ENCODE measurements at regions of chr7 and their contacts with region 1.

Region 1: DNA sequence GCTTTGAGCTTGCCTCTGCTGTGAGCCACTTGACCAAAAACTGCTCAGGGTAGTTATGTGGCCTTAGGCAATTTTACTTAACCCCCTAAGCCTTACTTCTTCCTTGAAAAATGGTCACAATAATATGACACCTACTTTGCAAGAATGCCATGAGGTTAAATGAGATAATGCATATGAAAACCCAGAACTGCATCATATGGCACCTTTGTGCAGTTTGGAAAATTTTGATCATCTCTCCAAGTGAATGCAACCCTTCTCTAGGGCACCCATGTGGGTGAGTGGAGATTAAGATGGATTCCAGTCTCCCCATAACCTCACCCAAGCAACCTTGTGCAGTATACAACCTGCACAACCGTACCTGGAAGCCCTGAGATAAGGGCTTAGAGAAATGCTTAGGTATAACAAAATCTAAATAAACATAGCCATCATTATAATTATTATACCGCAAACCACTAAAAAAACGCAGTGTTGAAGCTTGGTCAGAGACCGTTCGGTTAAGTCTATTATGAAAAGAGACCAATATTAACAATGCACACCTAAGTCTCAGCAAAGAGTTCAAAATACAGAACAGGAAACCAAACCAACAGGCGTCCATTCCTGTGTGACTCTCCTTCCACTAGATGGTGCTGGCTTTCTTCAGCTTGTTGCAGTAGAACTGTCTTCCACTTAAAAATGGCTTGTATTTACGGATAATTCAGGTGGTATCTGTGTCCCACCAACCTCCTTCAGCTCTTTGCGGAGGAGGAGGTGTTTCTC is 21.0 kb upstream of the ASB15 start:
- DNase-seq: peak in 2 of 4 experiments; percentile 43 to 78
- ATAC-seq: peak; percentile 96
- H3K4me3 ChIP-seq: no peak overlapping the region
- H3K27ac ChIP-seq: no peak overlapping the region
- H3K4me1 ChIP-seq: 0 out of 5 replicates have a peak, but pooled peaks cover 0 to 2% of the 10 kb centered on the region in 2 experiments
- H3K27me3 ChIP-seq: no peaks in the 10 kb centered on the region
- CTCF ChIP-seq: peak; percentile 81 to 95 (median 83)
- EP300 ChIP-seq: no peak
- POLR2A ChIP-seq: no peak
- RAD21 ChIP-seq: peak; percentile 97 to 98

Region 2: DNA sequence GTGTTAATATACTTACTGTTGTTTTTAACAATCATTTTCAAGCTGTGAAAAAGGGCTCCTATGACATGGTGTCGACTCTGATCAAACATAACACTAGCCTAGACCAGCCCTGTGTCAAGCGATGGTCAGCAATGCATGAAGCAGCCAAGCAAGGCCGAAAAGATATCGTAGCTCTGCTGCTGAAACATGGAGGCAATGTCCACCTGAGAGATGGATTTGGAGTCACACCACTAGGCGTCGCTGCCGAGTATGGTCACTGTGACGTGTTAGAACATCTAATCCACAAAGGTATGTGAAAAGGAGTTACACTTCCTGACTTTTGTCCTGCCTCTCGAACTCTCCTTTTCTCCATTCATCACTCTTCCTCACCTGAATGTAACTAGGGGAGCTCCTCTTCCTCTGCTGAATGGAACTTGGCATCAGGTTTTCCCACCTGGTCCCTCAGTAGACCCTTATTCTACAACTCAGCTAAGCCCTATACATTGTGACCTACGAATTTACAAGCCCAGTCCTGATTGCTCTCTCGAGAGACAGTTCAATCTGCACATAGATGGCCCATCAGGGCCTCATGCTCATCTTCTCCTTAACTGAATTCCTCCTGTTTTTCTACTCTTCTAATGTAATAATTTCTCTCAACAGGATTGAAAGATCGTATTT is 44.1 kb after region 1 on chr7:
- CTCF ChIA-PET with region 1: no interaction called
- POLR2A ChIA-PET with region 1: no interaction called
- in situ Hi-C with region 1: no loop called
- intact Hi-C with region 1: loop called (anchors 1 kb)
- DNase-seq: peak; percentile 76 to 93 (median 78)
- ATAC-seq: peak; percentile 91
- H3K4me3 ChIP-seq: no peak overlapping the region
- H3K27ac ChIP-seq: peak overlapping the region; percentile 11; the same call in 1 of the 3 replicates
- H3K4me1 ChIP-seq: peaks cover 0 to 6% of the 10 kb centered on the region in 2 experiments; a peak in 2 of 5 replicates
- H3K27me3 ChIP-seq: no peaks in the 10 kb centered on the region; a peak in 1 of 5 replicates
- CTCF ChIP-seq: peak; percentile 92 to 99 (median 97)
- EP300 ChIP-seq: 0 out of 2 replicates have a peak, but pooled peaks have one; percentile 29
- POLR2A ChIP-seq: no peak
- RAD21 ChIP-seq: peak; percentile 54 to 85

Region 3: GRCh38 chr7:123797673-123798527 is 217.3 kb after region 1 on chr7:
- CTCF ChIA-PET with region 1: no interaction called
- POLR2A ChIA-PET with region 1: no interaction called
- in situ Hi-C with region 1: no loop called
- intact Hi-C with region 1: loop called (anchors 5 kb)
- DNase-seq: peak in 3 of 4 experiments; percentile 27 to 59 (median 28)
- ATAC-seq: peak; percentile 78
- H3K4me3 ChIP-seq: no peak overlapping the region
- H3K27ac ChIP-seq: no peak overlapping the region
- H3K4me1 ChIP-seq: peaks cover 0 to 13% of the 10 kb centered on the region in 2 experiments; a peak in 1 of 5 replicates
- H3K27me3 ChIP-seq: no peaks in the 10 kb centered on the region
- CTCF ChIP-seq: peak; percentile 42 to 80 (median 45); a peak in 4 of 6 replicates
- EP300 ChIP-seq: no peak
- POLR2A ChIP-seq: no peak
- RAD21 ChIP-seq: peak; percentile 87 to 91

Region 4: DNA sequence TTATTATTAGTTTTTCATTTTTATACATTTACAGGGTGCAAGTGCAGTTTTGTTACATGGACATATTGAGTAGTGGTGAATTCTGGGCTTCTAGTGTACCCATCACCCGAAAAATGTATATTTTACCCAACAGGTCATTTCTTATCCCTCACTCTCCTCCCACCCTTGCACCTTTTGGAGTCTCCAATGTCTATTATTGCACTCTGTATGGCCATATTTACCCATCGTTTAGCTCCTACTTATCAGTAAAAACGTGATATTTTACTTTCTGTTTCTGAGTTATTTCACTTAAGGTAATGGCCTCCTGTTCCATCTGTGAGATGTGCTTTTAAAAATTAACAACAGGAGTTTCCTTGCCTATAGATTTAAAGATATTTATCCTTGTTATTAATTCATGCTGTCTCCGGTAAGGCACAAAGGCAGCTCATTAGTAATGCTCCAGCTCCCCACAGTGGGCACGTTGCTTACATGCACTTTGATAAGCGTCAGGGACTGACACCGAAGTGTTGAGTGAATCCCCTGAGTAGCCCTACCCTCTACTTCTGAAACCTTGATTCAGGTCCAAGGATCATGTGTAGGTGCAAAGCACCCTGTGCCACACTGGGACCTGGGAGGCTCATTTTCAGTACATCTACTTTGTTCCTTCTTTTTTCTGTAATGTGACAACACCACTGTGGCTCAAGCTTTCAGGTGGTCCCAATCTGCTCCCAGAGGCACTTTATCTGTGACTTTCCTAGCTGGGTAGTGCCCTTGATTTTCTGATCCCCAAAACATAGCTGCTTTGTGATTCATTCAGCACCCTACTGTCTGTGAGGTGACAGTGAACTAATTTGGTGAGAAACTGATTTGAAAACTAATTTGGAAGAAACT is 291.6 kb after region 1 on chr7:
- CTCF ChIA-PET with region 1: interaction called, 3 read pairs
- POLR2A ChIA-PET with region 1: no interaction called
- in situ Hi-C with region 1: no loop called
- intact Hi-C with region 1: loop called (anchors 2 kb)
- DNase-seq: peak in 2 of 4 experiments; percentile 45 to 67
- ATAC-seq: peak; percentile 95
- H3K4me3 ChIP-seq: no peak overlapping the region
- H3K27ac ChIP-seq: no peak overlapping the region
- H3K4me1 ChIP-seq: no peaks in the 10 kb centered on the region
- H3K27me3 ChIP-seq: peaks cover 0 to 9% of the 10 kb centered on the region in 2 experiments; a peak in 1 of 5 replicates
- CTCF ChIP-seq: peak; percentile 62 to 82 (median 79)
- EP300 ChIP-seq: no peak
- POLR2A ChIP-seq: no peak
- RAD21 ChIP-seq: peak; percentile 89 to 94